ENCODE measurements at regions of chr13 and their contacts with region 1.

Region 1: DNA sequence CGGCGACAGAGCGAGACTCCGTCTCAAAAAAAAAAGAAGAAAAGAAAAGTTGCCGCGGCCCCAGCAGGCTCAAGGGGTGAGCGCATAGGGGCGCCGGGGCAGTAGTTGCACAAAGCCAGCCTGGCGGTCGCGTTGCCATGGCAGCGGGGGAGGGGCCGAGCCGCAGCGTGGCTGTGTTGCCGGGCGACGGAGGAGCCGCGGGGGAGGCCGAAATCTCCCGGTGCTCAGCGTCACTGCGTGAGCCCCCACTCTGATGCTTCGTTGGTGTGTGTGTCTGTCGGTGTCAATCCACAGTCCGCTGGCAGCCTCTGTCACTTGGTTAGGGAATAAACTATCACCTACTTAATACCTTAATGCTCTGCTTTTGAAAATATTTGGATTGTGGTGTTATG is 82.9 kb upstream of the C1QTNF9B start:
- DNase-seq: peak; percentile 91
- ATAC-seq: peak; percentile 87
- H3K4me3 Mint-ChIP-seq: peak overlapping the region; percentile 65
- H3K27ac Mint-ChIP-seq: no peak overlapping the region
- H3K4me1 Mint-ChIP-seq: peaks cover 10% of the 10 kb centered on the region
- H3K27me3 Mint-ChIP-seq: peaks cover 16% of the 10 kb centered on the region

Region 2: GRCh38 chr13:23888658-23889614 is 91.2 kb before region 1 on chr13 and contains the start of gene MIPEP:
- CTCF ChIA-PET with region 1: no interaction called
- POLR2A ChIA-PET with region 1: no interaction called
- intact Hi-C with region 1: loop called in 1 of 2 experiments (anchors 1 kb)
- DNase-seq: peak; percentile 94
- ATAC-seq: peak; percentile 90
- H3K4me3 Mint-ChIP-seq: peak within 1 kb of the TSS; percentile 79
- H3K27ac Mint-ChIP-seq: peak within 1 kb of the TSS; percentile 75
- H3K4me1 Mint-ChIP-seq: peaks cover 23% of the 10 kb centered on the region
- H3K27me3 Mint-ChIP-seq: no peaks in the 10 kb centered on the region
- total RNA-seq, gene MIPEP: 13.2 to 15.5 TPM

Region 3: DNA sequence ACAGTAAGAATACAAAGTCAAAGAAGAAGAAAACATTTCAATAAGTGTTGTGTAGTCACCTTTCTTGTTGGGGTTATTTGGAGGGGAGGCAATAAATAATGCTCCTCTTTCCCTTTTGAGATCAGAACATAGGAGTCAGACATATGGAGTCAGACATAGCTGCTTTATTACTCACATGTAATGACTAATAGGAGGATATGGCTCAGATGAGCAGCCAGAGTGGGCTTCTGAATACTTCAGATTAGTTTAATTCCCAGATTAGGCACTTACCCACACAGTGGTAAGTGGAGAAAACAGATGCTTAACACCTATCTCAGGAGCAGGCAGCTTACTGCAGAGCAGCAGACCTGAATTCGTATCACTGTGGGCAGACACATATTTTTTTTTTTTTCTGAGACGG is 51.2 kb before region 1 on chr13:
- CTCF ChIA-PET with region 1: no interaction called
- POLR2A ChIA-PET with region 1: no interaction called
- intact Hi-C with region 1: loop called in 1 of 2 experiments (anchors 5 kb)
- DNase-seq: no peak
- ATAC-seq: peak; percentile 61
- H3K4me3 Mint-ChIP-seq: no peak overlapping the region
- H3K27ac Mint-ChIP-seq: no peak overlapping the region
- H3K4me1 Mint-ChIP-seq: no peaks in the 10 kb centered on the region
- H3K27me3 Mint-ChIP-seq: peaks cover 15% of the 10 kb centered on the region

Measured in activated CD4-positive, alpha-beta T cell treated with anti-CD3 and anti-CD28 coated beads for 36 hours (primary cell).